Activated B cell treated with CpG ODN at 0.5 μM for 24 hours (primary cell): ENCODE measurements at regions of chr7 and their contacts with region 1.

Region 1: GRCh38 chr7:155298834-155299534 is 1.3 kb downstream of the INSIG1 start:
- DNase-seq: peak; percentile 86
- ATAC-seq: peak; percentile 72
- H3K4me3 Mint-ChIP-seq: peak overlapping the region; percentile 94
- H3K27ac Mint-ChIP-seq: peak overlapping the region; percentile 94
- H3K4me1 Mint-ChIP-seq: peaks cover 42% of the 10 kb centered on the region
- H3K27me3 Mint-ChIP-seq: no peaks in the 10 kb centered on the region
- CTCF ChIP-seq: no peak

Region 2: DNA sequence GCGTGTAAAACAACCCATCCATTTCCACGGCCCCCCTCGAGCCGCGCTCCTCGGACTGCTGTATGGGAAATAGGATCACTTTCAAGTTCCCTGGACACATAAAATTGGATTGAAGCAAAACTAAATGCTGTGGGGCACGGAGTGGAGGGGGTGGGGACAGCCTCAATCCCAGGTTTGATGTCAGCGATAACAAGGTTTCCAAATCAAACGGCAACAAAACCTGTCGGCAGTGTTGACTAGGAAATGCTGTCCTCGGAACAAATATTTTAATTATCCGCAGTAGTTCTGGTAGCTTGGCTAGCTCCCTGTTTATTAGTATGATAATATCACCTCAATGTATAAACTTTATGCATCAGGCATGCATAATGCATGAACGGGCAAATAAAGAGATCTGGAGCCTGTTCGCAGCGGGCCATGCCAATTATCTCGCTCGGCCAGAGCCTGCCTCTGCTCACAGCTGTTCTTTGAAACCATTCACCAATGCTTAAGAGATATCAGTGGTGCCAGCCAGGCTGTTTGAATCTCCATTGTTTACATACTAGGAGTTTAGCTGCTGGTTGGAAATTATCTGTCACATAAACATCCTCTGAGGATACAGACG is 457.2 kb before region 1 on chr7:
- CTCF ChIA-PET with region 1: no interaction called
- POLR2A ChIA-PET with region 1: no interaction called
- intact Hi-C with region 1: no loop called
- DNase-seq: no peak
- ATAC-seq: no peak
- H3K4me3 Mint-ChIP-seq: no peak overlapping the region
- H3K27ac Mint-ChIP-seq: no peak overlapping the region
- H3K4me1 Mint-ChIP-seq: no peaks in the 10 kb centered on the region
- H3K27me3 Mint-ChIP-seq: peaks cover 8% of the 10 kb centered on the region
- CTCF ChIP-seq: no peak

Region 3: GRCh38 chr7:155003376-155004214 is 295.4 kb before region 1 on chr7:
- CTCF ChIA-PET with region 1: no interaction called
- POLR2A ChIA-PET with region 1: interaction called, 41 read pairs
- intact Hi-C with region 1: loop called (anchors 1 kb)
- DNase-seq: no peak
- ATAC-seq: peak; percentile 86
- H3K4me3 Mint-ChIP-seq: peak overlapping the region; percentile 92
- H3K27ac Mint-ChIP-seq: peak overlapping the region; percentile 83
- H3K4me1 Mint-ChIP-seq: peaks cover 19% of the 10 kb centered on the region
- H3K27me3 Mint-ChIP-seq: no peaks in the 10 kb centered on the region
- CTCF ChIP-seq: no peak

Region 4: DNA sequence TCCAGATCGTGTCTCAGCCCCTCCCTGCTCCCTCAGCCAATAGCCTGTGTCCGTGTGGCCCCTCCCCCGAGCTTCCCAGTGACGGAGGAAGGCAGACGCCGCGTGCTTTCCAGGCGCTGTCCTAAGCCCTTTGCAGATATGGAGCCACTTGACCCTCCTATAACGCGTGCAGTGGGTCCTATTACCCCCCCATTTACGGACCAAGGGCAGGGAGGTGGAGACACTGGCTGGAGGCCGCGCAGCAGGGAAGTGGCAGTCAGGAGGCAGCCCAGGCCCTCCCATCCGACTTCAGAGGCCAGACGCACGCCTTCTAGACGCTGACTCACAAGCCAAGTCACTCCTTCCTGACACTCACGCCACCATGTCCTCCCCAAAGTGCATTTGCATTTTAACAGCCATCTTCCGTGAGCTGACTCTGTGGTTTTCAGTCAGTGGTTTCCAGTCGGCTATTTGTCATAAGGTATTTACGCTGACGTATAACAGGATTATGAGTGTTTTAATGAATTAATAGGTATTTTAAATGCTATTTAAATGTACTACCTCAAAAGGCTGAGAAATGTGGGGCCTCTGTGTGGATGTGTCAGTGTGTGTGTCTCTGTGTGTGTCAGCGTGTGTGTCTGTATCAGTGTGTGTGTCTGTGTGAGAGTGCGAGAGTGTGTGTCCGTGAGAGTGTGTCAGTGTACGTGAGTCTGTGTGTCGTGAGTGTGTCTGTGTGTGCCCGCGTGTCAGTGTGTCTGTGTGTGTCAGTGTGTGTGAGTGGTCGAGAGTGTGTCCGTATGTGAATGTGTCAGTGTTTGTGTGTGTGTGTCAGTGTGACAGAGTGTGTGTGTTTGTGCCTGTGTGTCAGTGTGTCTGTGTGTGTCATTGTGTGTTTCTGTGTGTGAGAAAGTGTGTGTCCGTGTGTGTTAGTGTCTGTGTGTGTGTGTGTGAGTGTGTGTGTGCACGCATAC is 93.3 kb before region 1 on chr7:
- CTCF ChIA-PET with region 1: interaction called, 3 read pairs
- POLR2A ChIA-PET with region 1: interaction called, 176 read pairs
- intact Hi-C with region 1: loop called (anchors 1 kb)
- DNase-seq: peak; percentile 75
- ATAC-seq: peak; percentile 81
- H3K4me3 Mint-ChIP-seq: peak overlapping the region; percentile 82
- H3K27ac Mint-ChIP-seq: peak overlapping the region; percentile 97
- H3K4me1 Mint-ChIP-seq: peaks cover 32% of the 10 kb centered on the region
- H3K27me3 Mint-ChIP-seq: no peaks in the 10 kb centered on the region
- CTCF ChIP-seq: no peak

Region 5: GRCh38 chr7:155344600-155345433 is 45.8 kb after region 1 on chr7:
- CTCF ChIA-PET with region 1: interaction called, 7 read pairs
- POLR2A ChIA-PET with region 1: interaction called, 31 read pairs
- intact Hi-C with region 1: loop called (anchors 1 kb)
- DNase-seq: peak; percentile 87
- ATAC-seq: peak; percentile 77
- H3K4me3 Mint-ChIP-seq: peak overlapping the region; percentile 79
- H3K27ac Mint-ChIP-seq: no peak overlapping the region
- H3K4me1 Mint-ChIP-seq: peaks cover 13% of the 10 kb centered on the region
- H3K27me3 Mint-ChIP-seq: no peaks in the 10 kb centered on the region
- CTCF ChIP-seq: peak; percentile 77

Region 6: DNA sequence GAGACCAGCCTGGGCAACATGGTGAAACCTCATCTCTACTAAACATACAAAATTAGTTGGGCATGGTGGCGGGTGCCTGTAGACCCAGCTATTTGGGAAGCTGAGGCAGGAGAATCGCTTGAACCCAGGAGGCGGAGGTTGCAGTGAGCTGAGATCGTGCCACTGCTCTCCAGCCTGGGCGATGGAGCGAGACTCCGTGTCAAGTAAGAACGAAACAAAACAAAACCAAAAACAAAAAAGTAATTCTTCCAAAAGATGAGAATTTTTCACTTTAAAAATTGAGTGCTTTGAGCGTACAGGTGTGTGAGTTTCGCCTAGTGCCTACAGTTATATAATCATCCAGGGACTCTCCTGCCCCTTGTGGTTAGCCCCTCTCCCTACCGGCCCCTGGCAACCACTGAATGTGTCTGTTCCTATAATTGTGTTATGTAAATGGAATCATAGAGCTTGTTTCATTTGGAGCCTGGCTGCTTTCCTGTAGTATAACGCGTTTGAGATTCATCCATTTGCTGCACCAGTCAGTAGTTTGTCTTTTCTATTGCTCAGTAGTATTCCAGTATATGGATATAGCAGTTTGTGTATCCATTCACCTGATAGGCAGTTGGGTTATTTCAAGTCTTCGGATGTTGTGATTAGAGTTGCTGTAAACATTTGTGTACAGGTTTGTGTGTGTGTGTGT is 425.5 kb after region 1 on chr7:
- CTCF ChIA-PET with region 1: no interaction called
- POLR2A ChIA-PET with region 1: no interaction called
- intact Hi-C with region 1: loop called (anchors 5 kb)
- DNase-seq: no peak
- ATAC-seq: peak; percentile 41
- H3K4me3 Mint-ChIP-seq: peak overlapping the region; percentile 71
- H3K27ac Mint-ChIP-seq: peak overlapping the region; percentile 83
- H3K4me1 Mint-ChIP-seq: peaks cover 83% of the 10 kb centered on the region
- H3K27me3 Mint-ChIP-seq: no peaks in the 10 kb centered on the region
- CTCF ChIP-seq: no peak

Region 7: DNA sequence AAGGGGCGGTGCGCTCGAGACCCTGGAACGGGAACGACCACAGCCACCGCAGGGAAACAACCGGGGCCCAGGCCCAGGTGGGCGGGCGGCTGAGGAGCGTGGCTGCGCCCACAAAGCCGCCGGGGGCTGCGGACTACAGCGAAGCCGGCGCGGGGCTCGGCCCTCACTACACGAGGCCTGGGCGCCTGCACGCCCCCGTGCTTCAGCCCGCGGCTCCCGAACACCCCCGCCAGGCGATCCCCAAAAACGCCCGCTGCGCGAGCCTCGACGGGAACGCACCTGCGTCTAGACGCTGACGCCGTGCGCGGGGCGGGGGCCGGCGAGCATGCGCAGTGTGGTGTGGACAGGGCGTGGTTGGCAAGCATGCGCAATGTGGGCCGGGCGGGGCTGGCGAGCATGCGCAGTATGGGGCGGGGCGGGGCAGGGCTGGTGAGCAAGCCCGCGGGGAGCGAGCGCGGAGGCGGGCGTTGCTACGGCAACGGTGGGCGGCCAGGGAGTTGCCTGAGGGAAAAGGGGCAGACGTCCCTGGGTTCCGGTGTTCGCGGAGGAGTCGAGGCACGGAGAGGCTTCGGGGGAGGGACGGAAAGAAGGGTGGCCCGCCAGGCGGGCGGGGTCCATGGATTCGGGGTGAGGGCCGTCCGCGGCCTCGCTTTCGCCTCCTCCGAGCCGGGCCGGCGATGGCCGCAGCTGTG is 1341.4 kb after region 1 on chr7 and contains the start of gene RNF32:
- CTCF ChIA-PET with region 1: no interaction called
- POLR2A ChIA-PET with region 1: interaction called, 3 read pairs
- intact Hi-C with region 1: loop called (anchors 5 kb)
- DNase-seq: peak; percentile 98
- ATAC-seq: peak; percentile 84
- H3K4me3 Mint-ChIP-seq: peak within 1 kb of the TSS; percentile 92
- H3K27ac Mint-ChIP-seq: peak within 1 kb of the TSS; percentile 96
- H3K4me1 Mint-ChIP-seq: peaks cover 29% of the 10 kb centered on the region
- H3K27me3 Mint-ChIP-seq: no peaks in the 10 kb centered on the region
- CTCF ChIP-seq: no peak
- total RNA-seq, gene RNF32: 1.0 and 2.9 TPM in 2 replicates